ENCODE measurements at regions of chr2 and their contacts with region 1.

Region 1: DNA sequence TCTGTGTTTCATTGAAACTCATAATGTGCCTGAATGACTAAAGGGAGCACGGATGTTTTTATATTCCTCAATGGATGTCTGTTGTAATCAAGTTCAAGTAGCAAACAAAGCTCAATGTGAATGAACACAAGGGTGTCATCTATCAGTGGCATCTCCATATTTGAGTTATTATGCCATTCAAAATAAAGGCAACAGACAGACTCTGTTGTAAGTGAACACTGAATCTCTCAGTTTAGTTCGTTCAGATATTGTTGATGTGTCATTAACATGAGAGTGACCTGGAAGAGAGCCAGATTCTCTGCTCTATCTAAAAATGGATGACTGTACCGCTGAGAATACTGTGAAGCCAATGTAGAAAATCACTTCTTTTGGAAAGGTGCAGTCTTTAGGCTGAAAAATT is 118.7 kb downstream of the NUP35 start:
- DNase-seq: peak; percentile 11
- H3K4me3 ChIP-seq: no peak overlapping the region
- H3K27ac ChIP-seq: no peak overlapping the region
- H3K4me1 ChIP-seq: no peaks in the 10 kb centered on the region
- H3K27me3 ChIP-seq: no peaks in the 10 kb centered on the region
- CTCF ChIP-seq: no peak
- POLR2A ChIP-seq: no peak

Region 2: DNA sequence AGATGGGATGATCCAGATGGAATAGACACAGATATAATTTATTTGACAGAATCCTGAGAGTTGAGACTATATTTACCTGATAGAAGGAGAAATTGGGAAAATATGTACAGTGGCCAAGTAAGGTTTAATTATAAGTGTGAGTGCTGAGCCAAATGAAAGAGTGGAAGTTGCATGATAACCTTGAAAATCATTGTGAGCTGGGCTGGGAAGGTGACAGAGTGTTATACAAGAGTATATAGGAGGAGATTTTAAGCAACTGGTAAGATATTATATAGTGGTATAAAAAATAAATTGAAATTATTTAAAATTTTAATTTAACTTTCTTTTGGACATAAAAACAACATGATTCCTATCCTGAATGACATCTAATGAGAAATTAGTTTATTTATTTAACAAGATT is 222.1 kb after region 1 on chr2:
- CTCF ChIA-PET with region 1: no interaction called
- POLR2A ChIA-PET with region 1: no interaction called
- dilution Hi-C with region 1: no loop called
- intact Hi-C with region 1: loop called (anchors 5 kb)
- DNase-seq: no peak
- H3K4me3 ChIP-seq: no peak overlapping the region
- H3K27ac ChIP-seq: no peak overlapping the region
- H3K4me1 ChIP-seq: no peaks in the 10 kb centered on the region
- H3K27me3 ChIP-seq: no peaks in the 10 kb centered on the region
- CTCF ChIP-seq: no peak
- POLR2A ChIP-seq: no peak

Measured in endothelial cell of umbilical vein (primary cell).